Left ventricle myocardium inferior (tissue), 1 donor: ENCODE measurements at regions of chr11 and their contacts with region 1.

Region 1: DNA sequence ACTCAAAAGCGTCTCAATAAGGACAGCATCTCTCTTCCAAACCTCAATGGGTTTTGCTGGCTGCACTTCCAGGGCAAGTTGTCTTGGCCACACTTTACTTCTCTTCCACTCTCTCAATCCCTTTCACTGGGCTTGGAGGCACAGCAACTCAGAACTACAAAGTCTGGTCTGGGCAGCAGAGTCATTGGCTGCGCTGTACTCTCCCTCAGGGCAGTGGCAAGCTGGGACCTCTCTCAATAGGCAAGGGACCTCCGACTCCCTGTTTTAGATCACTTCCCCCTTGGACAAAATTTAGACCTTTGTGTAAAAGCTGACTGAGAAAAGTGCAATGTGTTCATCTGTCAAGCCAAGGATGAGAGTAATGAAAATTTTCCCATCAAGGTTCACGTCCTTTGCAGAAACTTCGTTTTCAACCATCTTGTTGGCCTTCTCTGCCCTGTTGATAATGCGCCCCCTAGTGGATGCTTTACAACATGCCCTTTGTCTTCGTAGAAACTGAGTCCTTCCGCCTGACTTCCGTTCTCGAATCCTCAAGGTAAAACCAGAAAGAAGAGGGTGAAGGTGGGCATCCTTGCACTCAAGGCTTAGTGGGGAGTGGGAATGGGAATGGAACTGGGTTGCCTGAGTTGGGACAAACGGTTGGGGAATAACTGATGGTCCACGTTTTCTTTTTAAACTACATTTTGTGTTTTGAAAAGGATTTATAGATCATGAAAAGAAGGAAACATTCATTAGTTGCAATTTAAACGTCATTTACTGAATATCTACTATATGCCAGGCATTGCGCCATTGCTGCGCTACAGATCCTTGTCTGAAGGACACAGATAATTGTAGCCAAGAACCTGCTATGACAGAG is 99.1 kb downstream of the CD44 start:
- DNase-seq: no peak
- H3K4me3 ChIP-seq: no peak overlapping the region
- H3K27ac ChIP-seq: no peak overlapping the region
- H3K4me1 ChIP-seq: peaks cover 10% of the 10 kb centered on the region
- H3K27me3 ChIP-seq: no peaks in the 10 kb centered on the region
- CTCF ChIP-seq: peak; percentile 82

Region 2: DNA sequence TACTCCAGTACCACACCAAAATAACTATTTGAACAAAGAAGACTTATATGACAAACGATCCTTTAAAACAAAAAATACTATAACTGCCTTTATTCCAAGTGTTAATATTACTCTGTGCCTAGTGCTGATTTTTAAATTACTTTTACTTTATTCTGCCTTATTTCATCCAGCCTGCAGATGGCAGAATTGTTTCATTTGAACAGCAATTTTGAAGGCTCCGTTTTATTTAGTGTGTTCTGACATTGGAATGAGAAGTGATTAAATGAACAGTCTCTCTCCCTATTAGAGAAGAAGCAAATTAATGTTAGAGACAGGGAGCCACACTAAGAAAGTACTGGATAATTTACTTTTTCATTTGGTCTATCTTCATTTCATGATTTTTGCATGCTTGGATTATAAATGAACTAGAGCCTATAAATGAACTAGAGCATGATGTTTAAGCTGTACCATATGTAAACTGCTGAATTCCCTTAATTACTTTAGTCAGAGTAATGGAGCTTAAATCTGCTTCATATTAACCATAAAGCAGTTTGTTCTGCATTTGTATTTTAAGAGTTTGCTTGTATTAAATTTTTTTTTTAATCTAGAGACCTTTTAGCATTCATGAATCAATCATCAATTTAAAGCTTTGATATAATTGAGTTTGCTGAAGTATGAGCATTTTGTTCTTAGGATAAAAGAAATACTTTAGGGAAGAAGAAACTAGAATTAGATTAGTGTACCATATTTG is 311.8 kb before region 1 on chr11:
- intact Hi-C with region 1: loop called (anchors 10 kb)
- DNase-seq: no peak
- H3K4me3 ChIP-seq: no peak overlapping the region
- H3K27ac ChIP-seq: no peak overlapping the region
- H3K4me1 ChIP-seq: peaks cover 77% of the 10 kb centered on the region
- H3K27me3 ChIP-seq: no peaks in the 10 kb centered on the region
- CTCF ChIP-seq: peak; percentile 76

Region 3: DNA sequence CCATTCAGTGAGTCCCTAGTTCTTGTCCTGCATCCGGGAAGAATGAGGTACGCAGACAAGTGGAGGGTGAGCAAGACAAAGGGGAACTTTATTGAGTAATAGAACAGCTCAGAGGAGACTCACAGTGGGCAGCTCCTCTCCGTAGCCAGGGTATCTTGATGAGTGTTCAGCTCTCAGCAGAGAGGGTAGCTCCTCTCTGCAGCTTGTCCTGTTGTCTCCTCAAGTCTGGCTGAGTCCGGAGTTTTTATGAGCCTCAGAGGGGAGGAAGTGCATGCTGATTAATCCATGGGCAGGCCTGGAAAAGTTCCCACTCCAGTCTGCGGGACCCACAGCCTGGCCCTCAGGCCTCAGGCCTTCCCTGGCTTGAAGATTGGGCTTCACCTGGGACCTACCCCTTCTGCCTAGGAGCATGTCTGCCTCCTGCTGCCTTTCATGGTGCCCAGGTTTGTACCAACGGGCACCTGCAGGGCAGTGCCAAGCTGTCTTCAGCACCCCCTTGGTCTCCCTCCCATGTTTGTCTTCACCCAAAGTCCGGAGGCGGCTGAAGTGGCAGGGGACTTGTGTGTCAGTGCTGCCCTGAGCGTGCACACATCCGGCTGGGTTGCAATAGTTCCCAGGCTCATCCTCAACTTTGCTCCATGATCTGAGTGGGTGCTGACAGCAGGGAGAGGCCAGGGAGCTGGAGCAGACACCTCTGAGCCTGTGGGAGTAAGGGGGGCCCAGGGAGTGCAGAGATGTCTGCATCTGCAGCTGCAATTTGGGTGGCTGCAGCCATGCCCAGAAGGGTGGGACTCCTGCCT is 840.0 kb after region 1 on chr11:
- intact Hi-C with region 1: no loop called
- DNase-seq: no peak
- H3K4me3 ChIP-seq: no peak overlapping the region
- H3K27ac ChIP-seq: no peak overlapping the region
- H3K4me1 ChIP-seq: peaks cover 12% of the 10 kb centered on the region
- H3K27me3 ChIP-seq: peaks cover 6% of the 10 kb centered on the region
- CTCF ChIP-seq: no peak